Heart right ventricle (tissue), 16 donors: ENCODE measurements at regions of chr1 and their contacts with region 1.

Region 1: DNA sequence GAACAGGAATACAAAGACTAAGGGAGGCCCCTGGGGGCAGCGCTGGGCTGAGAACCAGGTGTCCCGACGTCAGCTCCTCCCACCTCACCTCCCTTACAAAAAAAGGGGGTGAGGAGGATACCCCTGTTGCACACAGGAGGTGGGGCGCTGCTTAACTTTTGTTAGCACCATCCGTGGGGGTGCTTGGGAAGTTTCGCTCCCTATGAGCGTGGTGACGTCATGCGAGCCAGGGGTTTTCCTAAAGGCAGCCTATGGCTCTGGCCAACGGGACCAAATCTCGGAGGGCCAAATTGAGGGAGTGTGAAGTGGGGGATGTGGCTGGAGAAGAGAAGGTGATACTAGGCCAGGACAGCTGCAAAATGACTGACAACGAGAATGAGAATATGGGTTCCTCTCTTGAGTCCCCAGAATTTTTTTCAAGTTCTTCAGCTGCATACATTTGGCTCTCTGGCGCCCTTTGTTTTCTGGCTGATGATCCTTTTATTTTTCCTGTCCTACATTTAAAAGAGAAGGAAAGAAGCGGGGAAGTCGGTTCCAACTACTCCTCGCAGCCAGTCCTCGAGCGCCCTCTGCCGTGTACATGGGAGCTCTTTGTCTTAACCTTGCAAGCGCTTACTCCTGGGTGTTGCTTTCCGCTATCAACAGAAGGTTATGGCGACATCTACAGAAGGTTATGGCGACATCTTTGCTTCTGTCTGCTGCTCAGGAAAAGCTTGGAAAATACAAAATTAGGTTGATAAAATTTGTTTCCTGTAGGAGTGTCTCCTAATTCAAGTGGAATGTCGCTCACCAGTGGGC is 48.0 kb upstream of the ZC3H11B start:
- DNase-seq: peak; percentile 90
- ATAC-seq: peak; percentile 79 to 91 (median 86)
- H3K4me3 ChIP-seq: peak overlapping the region in 7 of 10 donors; percentile 9 to 40 (median 23)
- H3K27ac ChIP-seq: peak overlapping the region in 3 of 10 donors; percentile 2 to 58 (median 36)
- H3K4me1 ChIP-seq: peaks cover 0 to 36% (median 25%) of the 10 kb centered on the region in 9 donors
- H3K27me3 ChIP-seq: no peaks in the 10 kb centered on the region
- CTCF ChIP-seq: peak; percentile 49 to 90 (median 81)

Region 2: GRCh38 chr1:218323568-218324225 is 1337.2 kb before region 1 on chr1:
- intact Hi-C with region 1: loop called in 1 of 10 experiments (anchors 10 kb)
- DNase-seq: no peak
- ATAC-seq: peak in 2 of 8 donors; percentile 24 to 57
- H3K4me3 ChIP-seq: no peak overlapping the region
- H3K27ac ChIP-seq: no peak overlapping the region
- H3K4me1 ChIP-seq: no peaks in the 10 kb centered on the region
- H3K27me3 ChIP-seq: no peaks in the 10 kb centered on the region
- CTCF ChIP-seq: no peak

Region 3: GRCh38 chr1:219209578-219209977 is 451.3 kb before region 1 on chr1:
- intact Hi-C with region 1: loop called in 2 of 10 experiments (anchors 5 to 10 kb)
- DNase-seq: no peak
- ATAC-seq: peak in 6 of 8 donors; percentile 52 to 88 (median 66)
- H3K4me3 ChIP-seq: no peak overlapping the region
- H3K27ac ChIP-seq: no peak overlapping the region
- H3K4me1 ChIP-seq: peaks cover 0 to 7% (median 0%) of the 10 kb centered on the region in 9 donors
- H3K27me3 ChIP-seq: no peaks in the 10 kb centered on the region
- CTCF ChIP-seq: no peak

Region 4: DNA sequence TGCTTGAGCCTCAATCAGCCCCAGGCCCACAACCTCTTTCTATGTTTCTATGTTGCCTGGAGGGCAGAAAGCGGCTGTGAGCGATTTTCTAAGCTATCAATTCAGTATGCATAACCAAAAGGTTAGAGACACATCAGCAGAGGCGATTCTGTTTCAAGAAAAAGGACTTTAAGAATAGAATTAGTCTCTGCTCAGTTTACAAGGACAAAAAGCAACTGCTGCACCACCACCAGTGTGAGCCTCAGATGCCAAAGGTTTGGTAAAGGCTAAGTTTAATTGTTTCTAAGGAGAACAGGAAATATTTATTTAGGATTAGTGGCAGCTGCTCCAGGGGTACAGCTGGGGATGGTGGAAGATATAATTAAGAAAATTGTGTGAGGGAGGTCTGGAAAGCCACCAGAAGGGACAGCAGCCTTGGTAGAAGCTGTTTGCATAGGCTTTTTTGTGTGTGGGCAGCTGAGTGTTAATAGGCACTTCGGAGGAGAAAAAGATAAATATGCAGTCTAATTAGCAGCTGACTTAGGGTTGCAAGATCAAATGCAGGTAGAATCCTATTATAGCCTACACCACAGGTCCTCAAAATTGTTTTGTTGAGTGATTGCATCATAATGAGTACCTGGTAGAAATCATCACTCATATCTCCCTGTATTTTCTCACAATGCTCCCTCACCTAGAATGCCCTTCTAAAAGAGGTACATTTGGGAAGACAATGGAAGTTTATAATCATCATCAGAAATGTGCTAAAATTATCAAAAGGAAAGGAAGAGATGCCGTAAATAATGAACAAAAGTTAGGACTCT is 83.7 kb before region 1 on chr1:
- intact Hi-C with region 1: loop called in 3 of 10 experiments (anchors 10 kb)
- DNase-seq: no peak
- ATAC-seq: no peak
- H3K4me3 ChIP-seq: no peak overlapping the region
- H3K27ac ChIP-seq: no peak overlapping the region
- H3K4me1 ChIP-seq: peaks cover 0 to 14% (median 7%) of the 10 kb centered on the region in 9 donors
- H3K27me3 ChIP-seq: no peaks in the 10 kb centered on the region
- CTCF ChIP-seq: no peak

Region 5: DNA sequence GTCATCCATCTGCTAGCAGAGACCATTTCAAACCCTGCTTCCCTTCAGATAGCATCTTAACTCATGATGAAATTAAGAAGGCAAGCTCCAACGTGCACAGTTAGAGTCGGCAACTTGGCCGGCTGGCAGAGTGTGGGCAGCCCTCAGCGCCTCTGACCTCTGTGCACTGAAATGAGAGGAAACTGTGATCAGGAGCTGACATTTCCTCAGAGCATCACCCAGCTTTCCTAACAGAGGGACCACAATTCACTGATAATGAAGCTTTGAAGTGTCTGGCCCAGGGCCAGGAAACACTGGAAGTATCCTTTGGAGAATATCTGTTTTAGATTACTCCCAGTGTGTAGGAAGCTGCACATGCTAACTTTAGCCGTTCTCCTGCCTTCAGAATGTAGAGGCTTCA is 97.0 kb after region 1 on chr1:
- intact Hi-C with region 1: loop called in 1 of 10 experiments (anchors 10 kb)
- DNase-seq: peak; percentile 25 to 53
- ATAC-seq: peak; percentile 20 to 85 (median 64)
- H3K4me3 ChIP-seq: no peak overlapping the region
- H3K27ac ChIP-seq: peak overlapping the region in 1 of 10 donors; percentile 28
- H3K4me1 ChIP-seq: peaks cover 0 to 23% (median 10%) of the 10 kb centered on the region in 9 donors
- H3K27me3 ChIP-seq: no peaks in the 10 kb centered on the region
- CTCF ChIP-seq: no peak

Region 6: DNA sequence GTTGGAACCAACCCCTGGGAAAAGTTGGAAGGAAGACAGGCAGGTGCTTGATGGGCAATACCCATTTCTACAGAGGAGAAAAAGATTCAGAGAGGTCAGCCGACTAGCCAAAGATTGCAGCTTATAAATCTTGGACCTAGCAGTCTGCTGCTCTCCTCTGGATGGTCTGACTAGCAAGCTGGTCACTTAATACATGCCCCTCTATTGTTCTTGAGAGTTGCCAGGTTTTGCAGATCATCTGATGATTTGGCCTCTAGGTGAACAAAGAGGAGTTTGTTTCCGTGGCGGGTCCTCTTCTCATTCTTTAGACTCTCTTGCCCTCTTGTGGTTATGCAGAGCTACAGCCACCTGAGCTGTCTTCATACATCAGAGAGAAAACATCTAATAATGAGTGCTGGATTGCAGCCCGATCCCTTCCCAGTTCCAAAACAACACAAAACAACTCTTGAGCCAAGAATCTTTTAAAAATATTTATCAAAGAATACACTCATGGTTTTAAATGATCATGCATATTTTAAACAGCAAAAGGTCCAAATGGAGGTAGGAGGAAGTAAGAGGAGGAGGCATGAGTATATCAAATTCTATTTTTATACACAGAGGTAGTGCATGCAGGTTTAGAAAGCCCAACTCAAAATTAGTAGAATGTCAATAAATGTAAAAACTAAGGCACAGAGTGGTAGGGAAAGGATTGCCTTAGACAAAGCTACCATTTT is 151.8 kb after region 1 on chr1:
- intact Hi-C with region 1: loop called in 6 of 10 experiments (anchors 5 to 10 kb)
- DNase-seq: peak in 1 of 2 donors; percentile 21
- ATAC-seq: peak in 7 of 8 donors; percentile 70 to 83 (median 80)
- H3K4me3 ChIP-seq: no peak overlapping the region
- H3K27ac ChIP-seq: no peak overlapping the region
- H3K4me1 ChIP-seq: peaks cover 0 to 11% (median 4%) of the 10 kb centered on the region in 9 donors
- H3K27me3 ChIP-seq: peaks cover 0 to 10% (median 0%) of the 10 kb centered on the region in 7 donors
- CTCF ChIP-seq: peak; percentile 58 to 88 (median 79)

Region 7: GRCh38 chr1:220123889-220124288 is 463.0 kb after region 1 on chr1:
- intact Hi-C with region 1: no loop called
- DNase-seq: no peak
- ATAC-seq: no peak
- H3K4me3 ChIP-seq: no peak overlapping the region
- H3K27ac ChIP-seq: no peak overlapping the region
- H3K4me1 ChIP-seq: peaks cover 0 to 11% (median 4%) of the 10 kb centered on the region in 9 donors
- H3K27me3 ChIP-seq: no peaks in the 10 kb centered on the region
- CTCF ChIP-seq: peak in 5 of 9 donors; percentile 11 to 40 (median 22)